Dendritic cell treated with granulocyte-macrophage colony-stimulating factor and Interleukin-4, amounts not matched to agents 40 ng/mL and 50 ng/mL, for 4 days (primary cell): ENCODE measurements at regions of chr16 and their contacts with region 1.

Region 1: DNA sequence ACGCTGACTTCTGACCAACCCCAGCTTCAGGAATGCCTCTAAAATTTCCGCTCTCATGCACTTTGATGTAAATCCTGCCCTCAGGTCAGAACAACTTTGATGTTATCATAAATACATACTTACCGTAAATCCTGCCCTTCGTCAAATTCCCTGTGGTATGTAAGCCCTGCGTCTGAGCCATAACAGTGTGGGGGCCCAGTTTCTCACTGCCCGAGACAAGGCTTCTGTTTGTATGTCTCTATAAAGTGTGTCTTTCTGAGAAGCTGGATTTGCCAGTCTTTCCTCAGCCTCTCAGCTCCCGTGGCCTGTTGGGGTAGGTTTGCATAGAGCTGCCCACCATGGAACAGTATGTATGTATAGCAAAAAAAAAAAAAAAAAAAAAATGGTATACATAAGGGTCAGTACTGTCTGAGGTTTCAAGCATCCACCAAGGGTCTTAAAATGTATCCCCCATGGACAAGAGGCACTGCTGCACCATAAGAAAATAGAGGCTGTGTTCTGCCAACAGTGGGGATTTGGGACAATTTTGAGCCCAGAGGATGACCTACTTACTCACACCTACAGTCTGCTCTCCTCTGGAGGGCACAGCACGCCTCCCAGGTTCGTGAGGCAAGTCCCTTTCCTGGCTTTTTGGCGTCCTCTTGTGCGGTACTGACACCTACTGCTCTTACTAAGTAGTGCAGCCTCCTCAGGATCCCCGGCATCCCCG is 17.5 kb downstream of the PRMT7 start:
- H3K4me3 Mint-ChIP-seq: no peak overlapping the region
- H3K27ac Mint-ChIP-seq: no peak overlapping the region
- H3K4me1 Mint-ChIP-seq: peaks cover 20% of the 10 kb centered on the region
- H3K27me3 Mint-ChIP-seq: no peaks in the 10 kb centered on the region

Region 2: DNA sequence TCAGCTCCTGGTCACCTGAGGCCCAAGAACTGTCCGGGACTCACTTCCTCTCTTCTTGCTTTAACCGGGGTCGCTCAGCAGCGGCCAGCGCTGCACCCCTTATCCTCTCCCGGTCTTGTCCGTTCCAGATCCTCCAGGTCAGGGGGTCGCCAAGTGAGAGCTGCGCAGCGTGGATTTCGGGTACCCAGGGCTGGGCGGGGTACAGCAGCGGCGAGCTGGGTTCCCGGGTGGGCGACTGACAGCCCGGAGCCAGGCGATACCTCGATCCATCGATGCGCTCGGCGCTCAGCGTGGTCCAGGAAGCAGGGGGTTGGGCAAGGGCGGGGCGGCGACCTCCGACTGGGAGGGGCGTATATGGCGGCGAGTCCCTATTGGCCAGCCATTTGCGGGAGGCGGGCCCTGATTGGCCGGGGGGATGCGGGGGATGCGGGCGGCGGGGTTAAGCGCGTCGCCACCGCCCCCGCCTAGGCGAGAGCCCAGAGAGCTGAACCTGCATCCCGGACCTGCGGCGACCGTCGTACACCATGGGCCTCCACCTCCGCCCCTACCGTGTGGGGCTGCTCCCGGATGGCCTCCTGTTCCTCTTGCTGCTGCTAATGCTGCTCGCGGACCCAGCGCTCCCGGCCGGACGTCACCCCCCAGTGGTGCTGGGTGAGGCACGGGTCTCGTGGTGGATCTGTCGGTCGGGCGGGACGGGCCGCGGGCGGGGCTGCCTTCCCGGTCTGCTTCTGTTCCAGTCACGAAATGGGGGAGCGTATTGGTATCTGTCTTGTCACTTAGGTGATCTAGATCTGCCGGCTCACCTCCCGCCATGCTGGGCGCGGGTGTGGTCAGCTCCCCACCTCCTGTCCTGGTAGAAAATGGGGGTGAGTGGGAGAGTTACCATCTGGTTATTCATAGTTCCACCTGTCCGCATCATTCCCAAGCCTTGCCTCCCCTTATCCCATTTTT is 83.1 kb before region 1 on chr16 and contains the start of gene PLA2G15:
- intact Hi-C with region 1: loop called (anchors 1 kb)
- H3K4me3 Mint-ChIP-seq: peak within 1 kb of the TSS; percentile 95
- H3K27ac Mint-ChIP-seq: peak within 1 kb of the TSS; percentile 88
- H3K4me1 Mint-ChIP-seq: peaks cover 64% of the 10 kb centered on the region
- H3K27me3 Mint-ChIP-seq: no peaks in the 10 kb centered on the region

Region 3: DNA sequence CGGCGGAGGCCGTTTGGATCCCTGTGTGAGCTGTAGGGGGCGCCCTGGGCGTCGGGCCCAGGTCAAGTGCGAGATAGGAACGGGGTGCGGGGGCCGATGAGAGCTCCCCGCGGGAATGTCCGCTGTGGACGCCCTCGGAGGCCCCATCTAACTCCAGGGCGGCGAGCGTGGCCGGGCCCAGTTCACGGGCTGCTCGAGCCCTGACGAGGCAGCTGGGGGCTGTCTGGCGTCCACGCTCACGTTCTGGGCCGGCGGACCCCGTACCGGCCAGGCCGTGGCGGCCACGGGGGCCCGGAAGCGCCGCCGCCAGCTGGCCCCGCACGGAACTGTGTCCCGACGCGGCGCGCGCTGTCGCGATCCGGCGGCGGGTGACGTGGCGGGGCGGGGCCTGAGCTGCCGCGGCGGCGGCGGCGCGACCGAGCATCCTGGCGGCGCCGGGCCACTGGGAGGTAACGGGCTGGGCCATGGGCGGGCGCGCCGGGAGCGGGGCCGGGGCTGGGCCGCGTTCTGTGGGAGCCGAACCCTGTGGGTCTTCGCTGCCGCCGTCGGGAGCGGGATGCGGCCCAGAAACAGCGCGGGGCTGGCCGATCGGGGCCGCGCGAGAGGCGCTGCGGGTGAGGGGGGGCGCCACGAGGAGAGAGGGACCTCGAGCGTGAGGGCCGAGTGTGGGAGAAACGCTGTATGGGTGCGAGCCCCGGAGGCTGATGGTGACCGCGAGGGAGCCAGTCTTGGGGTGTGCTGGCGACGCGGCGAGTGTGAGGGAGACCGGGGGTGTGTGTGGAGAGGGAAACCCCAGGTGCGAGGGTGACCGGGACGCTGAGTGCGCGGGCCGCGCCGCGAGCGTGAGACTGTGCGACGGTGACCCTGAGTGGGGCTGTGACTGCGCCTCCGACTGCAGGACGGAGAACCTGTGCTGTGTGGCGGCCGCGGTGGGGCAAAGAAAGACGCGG is 63.9 kb before region 1 on chr16 and contains the start of gene SLC7A6:
- intact Hi-C with region 1: loop called (anchors 1 kb)
- H3K4me3 Mint-ChIP-seq: peak within 1 kb of the TSS; percentile 93
- H3K27ac Mint-ChIP-seq: peak within 1 kb of the TSS; percentile 92
- H3K4me1 Mint-ChIP-seq: peaks cover 41% of the 10 kb centered on the region
- H3K27me3 Mint-ChIP-seq: no peaks in the 10 kb centered on the region